A673 (cell line): ENCODE measurements at regions of chrX and their contacts with region 1.

Region 1: GRCh38 chrX:63959975-63960374 is 175.0 kb upstream of the ARHGEF9 start:
- DNase-seq: no peak
- H3K4me3 ChIP-seq: no peak overlapping the region
- H3K27ac ChIP-seq: no peak overlapping the region
- H3K4me1 ChIP-seq: no peaks in the 10 kb centered on the region
- H3K27me3 ChIP-seq: no peaks in the 10 kb centered on the region
- CTCF ChIP-seq: no peak

Region 2: DNA sequence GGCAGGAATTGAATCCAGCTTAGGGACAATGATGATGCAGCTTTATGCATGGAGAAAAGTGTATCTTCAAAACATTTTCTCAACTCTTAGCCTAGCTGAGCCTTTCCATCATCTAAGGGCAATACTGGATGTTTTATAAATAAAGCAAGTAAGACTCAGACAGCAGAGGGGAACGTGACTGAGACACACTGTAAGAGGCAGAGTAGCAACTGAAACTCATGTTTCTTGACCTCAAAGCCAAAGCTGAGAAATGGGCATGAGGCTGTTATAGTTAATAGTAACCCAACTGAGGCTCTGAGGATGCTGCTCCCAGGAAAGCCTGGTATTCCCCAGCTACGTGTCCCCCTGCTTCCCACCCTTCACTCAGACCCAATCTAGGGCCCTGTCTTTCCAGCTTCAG is 219.6 kb before region 1 on chrX:
- CTCF ChIA-PET with region 1: no interaction called
- POLR2A ChIA-PET with region 1: no interaction called
- intact Hi-C with region 1: no loop called
- DNase-seq: no peak
- H3K4me3 ChIP-seq: no peak overlapping the region
- H3K27ac ChIP-seq: no peak overlapping the region
- H3K4me1 ChIP-seq: no peaks in the 10 kb centered on the region
- H3K27me3 ChIP-seq: no peaks in the 10 kb centered on the region
- CTCF ChIP-seq: no peak

Region 3: DNA sequence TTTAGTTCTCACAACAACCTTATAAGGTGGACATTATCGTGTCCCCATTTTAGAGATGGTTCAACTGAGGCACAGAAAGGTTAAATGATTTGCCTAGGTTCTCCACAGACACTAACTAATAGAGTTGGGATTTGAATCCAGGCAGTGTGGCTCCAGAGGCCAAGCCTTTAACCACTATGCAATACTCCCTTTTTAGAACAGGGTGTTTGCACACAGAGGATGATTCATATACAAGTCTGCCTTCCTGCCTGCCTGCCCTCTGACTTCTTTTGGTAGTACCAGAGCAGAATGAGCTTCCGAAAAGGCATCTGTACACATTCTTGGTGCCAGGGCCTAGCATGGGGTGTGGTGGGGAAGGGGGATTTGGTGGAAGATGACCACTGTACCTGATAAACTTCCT is 24.1 kb before region 1 on chrX:
- CTCF ChIA-PET with region 1: no interaction called
- POLR2A ChIA-PET with region 1: no interaction called
- intact Hi-C with region 1: loop called (anchors 2 kb)
- DNase-seq: no peak
- H3K4me3 ChIP-seq: no peak overlapping the region
- H3K27ac ChIP-seq: no peak overlapping the region
- H3K4me1 ChIP-seq: no peaks in the 10 kb centered on the region
- H3K27me3 ChIP-seq: no peaks in the 10 kb centered on the region
- CTCF ChIP-seq: no peak

Region 4: GRCh38 chrX:64536736-64537135 is 576.8 kb after region 1 on chrX:
- CTCF ChIA-PET with region 1: no interaction called
- POLR2A ChIA-PET with region 1: no interaction called
- intact Hi-C with region 1: no loop called
- DNase-seq: no peak
- H3K4me3 ChIP-seq: no peak overlapping the region
- H3K27ac ChIP-seq: no peak overlapping the region
- H3K4me1 ChIP-seq: no peaks in the 10 kb centered on the region
- H3K27me3 ChIP-seq: no peaks in the 10 kb centered on the region
- CTCF ChIP-seq: no peak